Heart left ventricle (tissue), 16 donors: ENCODE measurements at regions of chr1 and their contacts with region 1.

Region 1: GRCh38 chr1:89632657-89633247 is at the start of gene LRRC8C:
- DNase-seq: peak; percentile 90 to 97 (median 91)
- ATAC-seq: peak; percentile 76 to 96 (median 92)
- H3K4me3 ChIP-seq: peak within 1 kb of the TSS; percentile 80 to 98 (median 96)
- H3K27ac ChIP-seq: peak within 1 kb of the TSS; percentile 90 to 99 (median 95)
- H3K4me1 ChIP-seq: peaks cover 0 to 72% (median 31%) of the 10 kb centered on the region in 12 donors
- H3K27me3 ChIP-seq: no peaks in the 10 kb centered on the region
- CTCF ChIP-seq: peak in 11 of 12 donors; percentile 20 to 83 (median 67)
- POLR2A ChIP-seq: peak in 1 of 2 donors; percentile 75
- total RNA-seq, gene LRRC8C: 5.6 to 16.3 (median 9.7) TPM

Region 2: DNA sequence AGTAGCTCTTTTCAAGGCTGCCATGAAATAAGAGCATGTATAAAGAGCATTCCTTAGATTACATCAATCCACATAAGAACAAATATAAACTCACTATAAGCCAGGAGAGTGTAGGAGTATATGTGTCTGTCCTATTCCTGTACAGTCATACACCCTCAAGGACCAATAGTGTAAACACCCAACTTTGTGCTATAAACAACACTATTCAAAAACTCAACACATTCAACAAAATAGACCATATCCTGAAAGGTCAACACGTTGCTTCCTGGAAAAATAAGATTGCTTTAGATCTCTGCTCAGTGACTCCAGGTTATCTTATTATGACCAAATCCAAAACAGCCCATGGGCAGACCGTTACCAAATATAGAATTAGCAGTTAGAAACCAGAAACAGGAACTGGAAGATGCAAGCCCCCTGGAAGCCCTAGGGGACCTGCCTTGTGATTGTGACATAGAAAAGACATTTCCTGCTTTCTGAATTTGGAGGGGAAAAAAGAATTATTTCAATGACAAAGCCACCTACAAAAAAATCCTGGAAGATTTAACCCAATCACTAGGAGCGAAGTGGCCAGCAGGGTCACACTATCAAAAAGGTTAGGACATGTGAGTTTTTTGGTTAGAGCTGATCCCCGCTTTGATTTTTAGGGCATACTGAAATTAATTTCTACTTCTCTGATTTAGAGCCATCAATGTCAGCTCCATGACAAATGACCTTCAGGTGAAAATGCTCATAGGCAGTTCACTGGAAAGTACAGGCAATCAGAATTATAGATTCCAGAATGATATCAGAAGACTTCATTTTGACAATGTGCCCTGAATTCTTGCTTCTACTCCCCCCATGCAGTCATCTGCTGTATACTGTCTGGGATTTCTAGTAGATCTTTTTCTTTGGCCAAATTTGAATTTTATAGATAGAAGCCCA is 60.1 kb after region 1 on chr1:
- intact Hi-C with region 1: loop called in 8 of 10 experiments (anchors 1 to 10 kb)
- DNase-seq: peak in 3 of 5 donors; percentile 39 to 67 (median 47)
- ATAC-seq: peak; percentile 32 to 92 (median 78)
- H3K4me3 ChIP-seq: no peak overlapping the region
- H3K27ac ChIP-seq: peak overlapping the region in 11 of 12 donors; percentile 3 to 81 (median 36)
- H3K4me1 ChIP-seq: peaks cover 9 to 70% (median 62%) of the 10 kb centered on the region in 12 donors
- H3K27me3 ChIP-seq: no peaks in the 10 kb centered on the region
- CTCF ChIP-seq: no peak
- POLR2A ChIP-seq: no peak

Region 3: DNA sequence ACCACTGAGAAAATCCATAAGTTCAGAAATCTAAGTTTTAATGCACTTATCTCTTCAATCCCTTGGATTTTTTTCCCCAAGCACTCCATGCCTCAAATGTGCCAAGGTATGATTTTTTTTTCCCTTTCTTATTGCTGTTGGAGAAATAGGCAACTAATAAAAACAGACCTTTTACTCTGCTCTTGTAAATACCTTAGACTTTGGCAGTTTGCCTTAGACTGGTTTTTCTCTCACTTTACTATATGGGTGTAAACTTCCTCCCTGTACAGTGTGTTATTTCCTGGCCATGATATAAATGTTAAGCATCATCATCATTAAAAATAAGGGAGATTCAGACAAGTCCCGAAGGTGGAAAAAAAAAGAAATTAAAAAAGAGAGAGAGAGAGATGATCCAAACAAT is 65.9 kb after region 1 on chr1:
- intact Hi-C with region 1: loop called in 8 of 10 experiments (anchors 1 to 10 kb)
- DNase-seq: no peak
- ATAC-seq: no peak
- H3K4me3 ChIP-seq: no peak overlapping the region
- H3K27ac ChIP-seq: peak overlapping the region in 3 of 12 donors; percentile 1 to 69 (median 27)
- H3K4me1 ChIP-seq: peaks cover 7 to 86% (median 52%) of the 10 kb centered on the region in 12 donors
- H3K27me3 ChIP-seq: no peaks in the 10 kb centered on the region
- CTCF ChIP-seq: no peak
- POLR2A ChIP-seq: no peak

Region 4: DNA sequence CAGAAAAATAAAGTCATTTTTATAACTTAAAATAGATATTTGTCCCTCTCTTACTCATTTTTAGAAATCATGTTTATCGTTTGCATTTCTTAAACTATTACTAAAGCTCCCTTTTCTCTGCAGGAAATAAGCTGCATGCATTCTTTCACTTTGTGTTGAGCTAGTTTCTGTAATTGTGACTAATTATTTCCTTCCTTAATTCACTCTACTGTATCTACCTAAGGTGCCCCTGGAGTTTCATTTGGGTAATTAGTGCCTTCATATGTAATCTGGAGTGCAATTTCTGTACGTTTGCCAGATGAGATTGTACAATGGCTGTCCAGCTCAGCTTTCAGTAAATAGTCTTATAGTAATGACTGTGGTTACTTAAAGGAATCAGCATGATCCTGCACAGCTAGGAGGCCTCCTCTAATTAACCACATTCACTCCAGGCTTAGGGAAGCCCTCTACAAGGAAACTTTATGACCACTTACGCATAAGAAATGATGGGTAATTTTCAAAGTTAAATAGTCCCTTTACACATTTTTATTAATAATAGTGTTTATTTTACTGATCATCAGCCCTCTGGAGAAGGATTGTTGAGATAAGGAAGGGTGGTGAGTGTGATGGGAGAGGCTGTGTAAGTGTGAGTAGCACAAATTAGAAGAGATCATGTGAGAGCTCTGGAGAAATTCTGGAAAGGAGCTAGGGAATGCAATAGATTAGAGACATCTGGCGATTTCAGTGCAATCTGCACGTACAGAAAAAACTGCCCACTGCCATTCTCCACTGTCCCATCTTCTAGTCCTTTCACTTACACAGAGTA is 87.0 kb after region 1 on chr1:
- intact Hi-C with region 1: loop called in 2 of 10 experiments (anchors 5 kb)
- DNase-seq: no peak
- ATAC-seq: no peak
- H3K4me3 ChIP-seq: peak overlapping the region in 1 of 12 donors; percentile 2
- H3K27ac ChIP-seq: peak overlapping the region in 8 of 12 donors; percentile 2 to 81 (median 26)
- H3K4me1 ChIP-seq: peaks cover 3 to 79% (median 33%) of the 10 kb centered on the region in 12 donors
- H3K27me3 ChIP-seq: no peaks in the 10 kb centered on the region
- CTCF ChIP-seq: no peak
- POLR2A ChIP-seq: no peak

Region 5: DNA sequence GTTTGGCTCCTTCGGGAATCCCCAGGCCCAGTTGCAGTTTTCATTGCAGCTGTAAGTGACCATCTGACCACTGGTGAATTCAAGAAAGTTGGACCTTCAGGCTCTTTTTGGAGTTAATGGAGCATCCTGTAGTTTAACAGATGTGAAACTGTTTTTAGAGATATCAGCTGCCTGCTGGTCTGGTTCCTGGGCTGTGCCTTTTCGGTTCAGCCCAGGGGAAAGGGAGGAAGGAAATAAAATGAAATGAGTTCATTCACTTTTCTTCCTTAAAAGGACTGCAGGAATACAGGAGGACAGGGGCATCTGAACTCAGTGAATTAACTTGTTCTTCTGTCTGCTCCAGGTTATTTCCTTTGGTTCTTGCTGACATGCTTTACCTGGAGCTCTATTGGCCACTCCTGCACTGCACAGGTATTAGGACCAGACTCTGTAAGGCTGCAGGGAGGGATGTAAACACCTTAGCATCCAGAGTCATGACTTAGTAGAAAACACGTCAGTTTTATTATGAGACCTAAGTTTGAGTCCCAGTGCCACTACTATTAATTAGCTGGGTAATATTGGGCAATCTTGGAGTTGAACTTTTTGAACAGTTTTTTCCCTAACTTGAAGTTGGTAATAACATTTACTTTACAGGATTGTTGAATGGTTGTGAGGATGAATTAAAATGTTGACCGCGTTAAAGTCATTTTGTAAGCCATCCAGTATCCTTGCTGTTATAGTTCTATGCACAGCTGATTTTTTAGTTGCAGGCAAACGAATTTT is 271.6 kb after region 1 on chr1:
- intact Hi-C with region 1: no loop called
- DNase-seq: peak in 2 of 5 donors; percentile 18 to 36
- ATAC-seq: peak in 3 of 4 donors; percentile 18 to 59 (median 19)
- H3K4me3 ChIP-seq: peak overlapping the region in 1 of 12 donors; percentile 11
- H3K27ac ChIP-seq: peak overlapping the region in 11 of 12 donors; percentile 27 to 72 (median 58)
- H3K4me1 ChIP-seq: peaks cover 6 to 70% (median 42%) of the 10 kb centered on the region in 12 donors
- H3K27me3 ChIP-seq: no peaks in the 10 kb centered on the region
- CTCF ChIP-seq: no peak
- POLR2A ChIP-seq: no peak

Region 6: DNA sequence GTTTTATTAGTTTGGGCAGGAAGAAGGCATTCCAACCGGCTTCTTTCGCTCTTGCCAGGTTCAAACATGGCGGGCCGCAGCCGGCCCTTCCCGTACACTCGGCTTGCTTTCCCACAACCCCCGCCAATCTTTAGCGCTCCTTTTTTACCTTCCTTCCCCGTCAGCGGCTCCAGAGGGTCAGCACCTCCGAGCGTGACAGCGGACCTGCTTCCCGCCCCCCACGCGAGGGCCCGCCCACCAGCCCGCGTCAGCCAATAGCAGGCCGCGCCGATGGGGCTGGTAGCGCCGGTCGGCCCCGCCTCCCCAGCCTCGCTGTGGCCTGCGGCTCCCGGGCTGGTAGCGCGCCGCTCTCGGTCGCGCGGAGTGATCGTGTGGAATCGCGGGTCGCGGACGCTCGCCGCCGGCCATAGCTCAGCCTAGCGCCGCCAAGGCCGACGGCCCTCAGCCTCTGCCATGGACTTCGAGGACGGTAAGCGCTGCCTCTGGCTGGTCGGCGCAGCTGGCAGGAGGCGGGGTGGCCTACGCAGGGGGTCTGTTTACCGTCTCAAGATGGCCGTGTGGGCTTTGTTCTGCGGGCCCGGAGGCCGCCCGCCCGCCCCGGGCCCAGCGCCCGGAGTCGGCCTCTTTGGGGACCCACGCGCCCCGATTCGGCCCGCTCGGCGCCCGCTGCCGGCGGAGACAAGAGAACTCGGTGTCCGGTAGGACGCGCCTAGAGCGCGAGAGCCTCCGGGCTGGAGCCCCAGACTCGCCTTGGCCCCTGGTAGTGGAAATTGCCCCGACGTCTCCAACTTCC is 362.2 kb after region 1 on chr1 and contains the start of gene ZNF326:
- intact Hi-C with region 1: loop called in 3 of 10 experiments (anchors 10 kb)
- DNase-seq: peak; percentile 96 to 98 (median 96)
- ATAC-seq: peak; percentile 97 to 99 (median 99)
- H3K4me3 ChIP-seq: peak within 1 kb of the TSS; percentile 66 to 97 (median 91)
- H3K27ac ChIP-seq: peak within 1 kb of the TSS; percentile 86 to 98 (median 96)
- H3K4me1 ChIP-seq: peaks cover 0 to 40% (median 26%) of the 10 kb centered on the region in 12 donors
- H3K27me3 ChIP-seq: no peaks in the 10 kb centered on the region
- CTCF ChIP-seq: peak in 2 of 12 donors; percentile 18 to 31
- POLR2A ChIP-seq: peak; percentile 86 to 96
- total RNA-seq, gene ZNF326: 4.9 to 14.7 (median 10.1) TPM